H1 (cell line): ENCODE measurements at regions of chr3 and their contacts with region 1.

Region 1: DNA sequence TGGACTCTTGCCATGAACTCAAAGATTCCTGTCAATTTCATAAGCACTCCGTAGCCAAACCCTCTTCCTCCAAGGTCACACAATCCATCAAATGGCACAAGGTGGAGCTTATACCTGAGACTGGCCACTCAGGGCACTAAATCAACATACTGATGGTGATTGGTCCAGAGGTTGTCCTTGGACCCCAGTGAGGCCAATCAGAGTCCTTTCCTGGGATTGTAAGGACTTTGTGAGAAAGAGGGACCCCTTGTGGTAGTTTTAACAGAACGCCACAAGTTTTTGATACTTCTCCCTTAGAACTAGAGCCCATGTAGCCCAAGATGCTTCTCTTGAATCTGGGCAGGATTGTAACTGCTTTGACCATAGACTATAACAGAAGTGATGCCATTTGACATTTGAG is 44.4 kb upstream of the LARS2 start:
- DNase-seq: no peak
- H3K4me3 ChIP-seq: no peak overlapping the region
- H3K27ac ChIP-seq: no peak overlapping the region
- H3K4me1 ChIP-seq: 0 out of 7 replicates have a peak, but pooled peaks cover 0 to 2% (median 0%) of the 10 kb centered on the region in 4 experiments
- H3K27me3 ChIP-seq: no peaks in the 10 kb centered on the region
- CTCF ChIP-seq: peak in 2 of 3 experiments; percentile 34 to 50; a peak in 2 of 4 replicates
- EP300 ChIP-seq: no peak
- POLR2A ChIP-seq: no peak
- RAD21 ChIP-seq: peak; percentile 49 to 68

Region 2: DNA sequence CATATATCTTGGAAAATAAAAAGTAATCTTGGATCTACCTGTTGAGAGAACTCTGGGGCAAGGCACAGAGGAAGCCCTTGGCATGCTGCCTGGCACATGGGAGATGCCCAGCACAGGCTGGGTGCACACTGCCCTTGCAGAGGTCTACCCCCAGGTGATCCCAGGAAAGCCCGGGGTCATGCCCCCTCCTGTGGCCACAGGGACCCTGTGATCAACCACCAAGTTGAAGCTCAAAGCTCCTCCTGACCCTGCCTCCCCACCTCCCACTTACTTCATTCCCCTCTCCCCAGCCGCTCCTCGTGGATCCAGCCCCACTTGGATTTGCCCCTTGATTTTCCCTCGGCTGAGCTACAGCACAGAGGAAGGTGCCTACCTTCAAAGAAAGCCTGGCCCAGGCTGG is 18.3 kb before region 1 on chr3:
- CTCF ChIA-PET with region 1: interaction called, 19 read pairs
- POLR2A ChIA-PET with region 1: no interaction called
- DNase-seq: no peak
- H3K4me3 ChIP-seq: no peak overlapping the region
- H3K27ac ChIP-seq: no peak overlapping the region
- H3K4me1 ChIP-seq: 0 out of 7 replicates have a peak, but pooled peaks cover 0 to 6% (median 0%) of the 10 kb centered on the region in 4 experiments
- H3K27me3 ChIP-seq: no peaks in the 10 kb centered on the region
- CTCF ChIP-seq: no peak
- EP300 ChIP-seq: no peak
- POLR2A ChIP-seq: no peak
- RAD21 ChIP-seq: no peak

Region 3: GRCh38 chr3:45333549-45333948 is 10.4 kb before region 1 on chr3:
- CTCF ChIA-PET with region 1: interaction called, 19 read pairs
- POLR2A ChIA-PET with region 1: no interaction called
- DNase-seq: no peak
- H3K4me3 ChIP-seq: no peak overlapping the region
- H3K27ac ChIP-seq: no peak overlapping the region
- H3K4me1 ChIP-seq: peaks cover 3 to 16% (median 9%) of the 10 kb centered on the region in 4 experiments
- H3K27me3 ChIP-seq: no peaks in the 10 kb centered on the region
- CTCF ChIP-seq: no peak
- EP300 ChIP-seq: no peak
- POLR2A ChIP-seq: no peak
- RAD21 ChIP-seq: peak in 1 of 2 experiments; percentile 24; a peak in 1 of 4 replicates

Region 4: DNA sequence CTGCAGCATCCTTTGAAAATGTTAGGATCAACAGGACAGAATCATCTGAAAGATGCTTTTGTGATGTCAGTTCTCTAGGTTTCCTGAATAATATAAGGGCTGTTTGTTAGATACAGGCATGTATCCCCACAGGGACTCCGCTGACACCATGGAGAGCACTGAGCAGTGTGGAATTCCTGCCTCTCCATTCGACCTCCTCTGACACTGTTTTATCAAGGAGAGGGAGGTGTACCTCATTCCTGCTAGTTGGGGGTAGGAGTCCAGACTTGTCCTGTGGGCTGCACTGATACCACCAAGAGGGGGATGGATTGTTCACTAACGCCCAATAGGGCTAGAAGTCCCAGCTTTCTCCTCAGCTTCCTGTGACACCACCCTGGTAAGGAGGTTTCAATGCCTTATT is 91.0 kb after region 1 on chr3:
- CTCF ChIA-PET with region 1: no interaction called
- POLR2A ChIA-PET with region 1: no interaction called
- DNase-seq: no peak
- H3K4me3 ChIP-seq: no peak overlapping the region
- H3K27ac ChIP-seq: peak overlapping the region; percentile 15; the same call in 1 of the 2 replicates
- H3K4me1 ChIP-seq: peaks cover 0 to 4% (median under 1%) of the 10 kb centered on the region in 4 experiments; a peak in 1 of 7 replicates
- H3K27me3 ChIP-seq: no peaks in the 10 kb centered on the region
- CTCF ChIP-seq: no peak
- EP300 ChIP-seq: no peak
- POLR2A ChIP-seq: no peak
- RAD21 ChIP-seq: no peak